ENCODE measurements at regions of chr10 and their contacts with region 1.

Region 1: DNA sequence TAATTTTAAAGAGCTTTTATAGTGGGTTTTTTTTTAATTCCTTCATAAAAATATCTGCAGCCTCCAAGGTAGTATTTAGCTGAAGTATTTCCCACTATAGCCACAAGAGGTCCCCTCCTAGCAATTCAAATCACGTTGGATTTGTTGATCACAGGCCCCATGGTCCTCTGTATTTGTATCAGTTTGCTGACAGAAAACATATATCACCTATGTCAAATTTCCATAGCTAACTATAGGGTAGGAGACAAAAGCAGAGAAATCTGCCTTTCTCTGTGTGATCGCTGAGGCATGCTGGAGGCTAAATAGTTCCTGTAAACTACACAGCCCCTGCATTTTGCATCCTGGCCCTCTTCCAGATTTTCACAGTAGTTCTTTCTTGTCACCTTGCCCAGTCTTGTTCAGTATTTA is 1.7 kb upstream of the CTNNA3 start:
- DNase-seq: peak; percentile 88
- ATAC-seq: peak; percentile 100
- H3K4me3 ChIP-seq: no peak overlapping the region
- H3K27ac ChIP-seq: no peak overlapping the region
- H3K4me1 ChIP-seq: no peaks in the 10 kb centered on the region
- H3K27me3 ChIP-seq: peaks cover 46% of the 10 kb centered on the region
- CTCF ChIP-seq: peak; percentile 88

Region 2: GRCh38 chr10:67735430-67735829 is 37.7 kb after region 1 on chr10:
- CTCF ChIA-PET with region 1: no interaction called
- POLR2A ChIA-PET with region 1: no interaction called
- intact Hi-C with region 1: no loop called
- DNase-seq: no peak
- ATAC-seq: no peak
- H3K4me3 ChIP-seq: no peak overlapping the region
- H3K27ac ChIP-seq: no peak overlapping the region
- H3K4me1 ChIP-seq: no peaks in the 10 kb centered on the region
- H3K27me3 ChIP-seq: peaks cover 41% of the 10 kb centered on the region
- CTCF ChIP-seq: no peak

Region 3: DNA sequence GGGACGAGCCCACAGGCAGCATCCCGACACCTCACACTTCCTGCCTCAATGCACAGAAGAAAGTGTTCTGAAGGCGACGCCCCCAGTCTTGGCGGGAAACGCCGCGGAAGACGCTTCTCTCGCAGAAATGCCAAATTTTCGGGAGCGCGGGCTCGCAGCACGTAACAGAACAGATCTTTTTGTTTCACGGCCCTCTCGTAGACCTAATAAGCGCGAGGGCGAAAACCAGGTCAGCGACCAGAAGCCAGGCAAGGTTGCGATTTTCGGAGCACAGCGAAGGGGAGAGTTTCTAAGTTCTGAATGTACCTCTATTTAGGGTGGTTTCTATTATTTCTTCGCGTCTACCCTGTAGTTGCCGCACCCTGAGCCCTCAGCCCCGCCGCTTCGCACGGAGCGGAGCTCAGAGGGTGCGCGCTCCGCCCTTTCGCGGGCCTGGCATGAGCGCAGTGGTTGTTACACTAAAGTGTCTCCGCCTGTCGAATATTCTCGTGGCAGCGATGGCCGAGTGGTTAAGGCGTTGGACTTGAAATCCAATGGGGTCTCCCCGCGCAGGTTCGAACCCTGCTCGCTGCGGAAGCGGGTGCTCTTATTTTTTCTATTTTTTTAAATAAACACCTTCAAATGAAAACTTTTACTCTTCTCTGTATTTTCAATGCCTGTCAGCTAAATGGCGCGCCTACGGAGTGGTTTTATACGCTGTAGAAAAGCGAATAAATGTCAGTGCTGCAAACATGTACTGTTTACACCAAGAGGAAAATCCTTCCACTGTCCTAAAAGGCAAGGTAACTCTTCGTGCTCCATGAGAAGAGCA is 66.5 kb after region 1 on chr10:
- CTCF ChIA-PET with region 1: interaction called, 3 read pairs
- POLR2A ChIA-PET with region 1: no interaction called
- intact Hi-C with region 1: loop called (anchors 5 kb)
- DNase-seq: peak; percentile 100
- ATAC-seq: peak; percentile 79
- H3K4me3 ChIP-seq: peak overlapping the region; percentile 82
- H3K27ac ChIP-seq: no peak overlapping the region; the same call in 1 of the 2 replicates
- H3K4me1 ChIP-seq: peaks cover 16% of the 10 kb centered on the region
- H3K27me3 ChIP-seq: peaks cover 10% of the 10 kb centered on the region
- CTCF ChIP-seq: no peak

Region 4: GRCh38 chr10:67779465-67780203 is 81.9 kb after region 1 on chr10:
- CTCF ChIA-PET with region 1: interaction called, 53 read pairs
- POLR2A ChIA-PET with region 1: interaction called, 7 read pairs
- intact Hi-C with region 1: loop called (anchors 1 kb)
- DNase-seq: peak; percentile 95
- ATAC-seq: peak; percentile 78
- H3K4me3 ChIP-seq: no peak overlapping the region
- H3K27ac ChIP-seq: no peak overlapping the region
- H3K4me1 ChIP-seq: peaks cover 11% of the 10 kb centered on the region
- H3K27me3 ChIP-seq: no peaks in the 10 kb centered on the region
- CTCF ChIP-seq: peak; percentile 95